Sigmoid colon (tissue), 7 donors: ENCODE measurements at regions of chr1 and their contacts with region 1.

Region 1: GRCh38 chr1:100866041-100866900 is 28.4 kb downstream of the EXTL2 start:
- DNase-seq: no peak
- H3K4me3 ChIP-seq: no peak overlapping the region
- H3K27ac ChIP-seq: no peak overlapping the region
- H3K4me1 ChIP-seq: peaks cover 0 to 8% (median 6%) of the 10 kb centered on the region in 4 donors
- H3K27me3 ChIP-seq: no peaks in the 10 kb centered on the region
- CTCF ChIP-seq: peak in 3 of 4 experiments; percentile 32 to 54 (median 41)
- EP300 ChIP-seq: no peak
- POLR2A ChIP-seq: no peak

Region 2: GRCh38 chr1:100459358-100460114 is 406.7 kb before region 1 on chr1:
- intact Hi-C with region 1: loop called (anchors 1 kb)
- DNase-seq: peak; percentile 86
- H3K4me3 ChIP-seq: no peak overlapping the region
- H3K27ac ChIP-seq: peak overlapping the region; percentile 18 to 73 (median 60)
- H3K4me1 ChIP-seq: peaks cover 0 to 13% (median 8%) of the 10 kb centered on the region in 4 donors
- H3K27me3 ChIP-seq: no peaks in the 10 kb centered on the region
- CTCF ChIP-seq: peak; percentile 84 to 87 (median 86)
- EP300 ChIP-seq: no peak
- POLR2A ChIP-seq: no peak

Region 3: GRCh38 chr1:100606438-100606837 is 259.8 kb before region 1 on chr1:
- intact Hi-C with region 1: loop called (anchors 2 kb)
- DNase-seq: no peak
- H3K4me3 ChIP-seq: no peak overlapping the region
- H3K27ac ChIP-seq: no peak overlapping the region
- H3K4me1 ChIP-seq: no peaks in the 10 kb centered on the region
- H3K27me3 ChIP-seq: no peaks in the 10 kb centered on the region
- CTCF ChIP-seq: peak in 3 of 4 experiments; percentile 21 to 45 (median 32)
- EP300 ChIP-seq: no peak
- POLR2A ChIP-seq: no peak

Region 4: DNA sequence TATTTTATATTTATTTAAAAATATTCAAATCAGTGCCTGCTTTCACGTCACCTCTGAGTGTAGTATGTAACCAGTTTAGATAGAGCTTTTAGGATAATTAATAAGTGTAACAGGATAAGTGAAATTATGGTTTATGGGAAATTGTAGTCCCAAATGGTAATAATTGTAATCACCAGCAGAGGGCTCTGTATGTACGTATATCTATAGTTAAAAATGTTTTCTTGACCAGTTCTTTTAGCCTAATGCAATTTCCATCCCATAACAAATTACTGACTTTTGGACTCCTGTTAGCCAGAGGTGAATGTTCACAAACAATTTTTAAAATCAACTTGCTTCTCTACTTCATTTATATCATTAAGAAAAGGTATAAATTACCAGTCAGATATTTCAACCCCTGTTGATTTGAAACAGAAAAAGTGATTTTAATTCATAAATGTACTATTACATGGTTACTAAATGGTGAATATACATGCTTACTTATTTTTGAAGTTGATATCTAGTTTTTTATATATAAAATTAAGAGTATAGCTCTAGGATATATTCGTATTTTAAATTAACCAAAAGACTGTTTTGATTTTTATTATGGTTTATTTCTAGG is 54.9 kb after region 1 on chr1:
- intact Hi-C with region 1: no loop called
- DNase-seq: no peak
- H3K4me3 ChIP-seq: no peak overlapping the region
- H3K27ac ChIP-seq: no peak overlapping the region
- H3K4me1 ChIP-seq: no peaks in the 10 kb centered on the region
- H3K27me3 ChIP-seq: no peaks in the 10 kb centered on the region
- CTCF ChIP-seq: peak; percentile 43 to 63 (median 52)
- EP300 ChIP-seq: no peak
- POLR2A ChIP-seq: no peak